Caco-2 (cell line): ENCODE measurements at regions of chr7 and their contacts with region 1.

Region 1: GRCh38 chr7:81956520-81956919 is 186.7 kb upstream of the HGF start:
- DNase-seq: peak; percentile 30 to 51
- H3K4me3 ChIP-seq: no peak overlapping the region
- H3K4me3 Mint-ChIP-seq: no peak overlapping the region
- H3K27ac Mint-ChIP-seq: no peak overlapping the region
- H3K4me1 ChIP-seq: no peaks in the 10 kb centered on the region
- H3K4me1 Mint-ChIP-seq: no peaks in the 10 kb centered on the region
- H3K27me3 ChIP-seq: no peaks in the 10 kb centered on the region
- H3K27me3 Mint-ChIP-seq: peaks cover 3% of the 10 kb centered on the region
- CTCF ChIP-seq: peak; percentile 53 to 71

Region 2: GRCh38 chr7:81482600-81483186 is 473.8 kb before region 1 on chr7:
- CTCF ChIA-PET with region 1: no interaction called
- POLR2A ChIA-PET with region 1: no interaction called
- intact Hi-C with region 1: loop called (anchors 1 kb)
- DNase-seq: no peak
- H3K4me3 ChIP-seq: no peak overlapping the region
- H3K4me3 Mint-ChIP-seq: no peak overlapping the region
- H3K27ac Mint-ChIP-seq: no peak overlapping the region
- H3K4me1 ChIP-seq: peaks cover 8% of the 10 kb centered on the region
- H3K4me1 Mint-ChIP-seq: no peaks in the 10 kb centered on the region
- H3K27me3 ChIP-seq: no peaks in the 10 kb centered on the region
- H3K27me3 Mint-ChIP-seq: peaks cover 4% of the 10 kb centered on the region
- CTCF ChIP-seq: peak; percentile 40 to 43

Region 3: DNA sequence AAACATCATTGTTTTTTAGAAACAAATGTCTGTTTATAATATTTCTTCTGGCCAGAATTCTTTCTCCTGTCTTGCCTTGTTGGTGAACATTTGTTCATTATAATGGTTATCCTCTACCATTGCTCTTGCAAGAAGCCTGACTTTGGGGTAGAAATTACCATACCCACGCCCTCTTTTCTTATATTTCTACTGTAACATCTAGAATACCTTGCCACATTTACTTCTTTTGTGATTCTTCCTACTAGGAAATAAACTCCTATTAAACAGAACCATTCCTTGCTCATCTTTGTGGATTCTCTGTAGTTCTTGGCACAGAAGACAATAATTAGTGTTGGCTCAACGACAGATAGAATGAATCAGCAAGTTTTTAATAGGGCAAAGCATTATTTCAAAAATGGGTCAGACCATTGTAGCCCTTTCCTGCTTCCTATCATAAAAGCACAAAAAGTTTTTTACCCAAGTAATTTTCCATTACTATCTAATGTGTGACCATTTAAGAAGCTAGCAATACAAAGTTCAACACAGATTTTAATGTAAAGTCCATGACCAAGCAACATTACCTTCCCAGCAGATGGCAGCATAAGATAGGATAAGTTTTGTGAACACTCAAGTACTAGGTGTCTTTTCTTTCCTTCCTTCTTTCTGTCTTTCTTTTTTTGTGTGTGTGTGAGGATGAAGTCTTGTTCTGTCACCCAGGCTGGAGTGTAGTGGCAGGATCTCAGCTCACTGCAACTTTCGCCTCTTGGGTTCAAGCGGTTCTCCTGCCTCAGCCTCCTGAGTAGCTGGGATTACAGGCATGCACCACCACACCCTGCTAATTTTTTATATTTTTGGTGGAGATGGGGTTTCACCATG is 457.0 kb before region 1 on chr7:
- CTCF ChIA-PET with region 1: no interaction called
- POLR2A ChIA-PET with region 1: no interaction called
- intact Hi-C with region 1: loop called (anchors 1 kb)
- DNase-seq: peak in 1 of 2 experiments; percentile 61
- H3K4me3 ChIP-seq: no peak overlapping the region
- H3K4me3 Mint-ChIP-seq: no peak overlapping the region
- H3K27ac Mint-ChIP-seq: no peak overlapping the region
- H3K4me1 ChIP-seq: no peaks in the 10 kb centered on the region
- H3K4me1 Mint-ChIP-seq: peaks cover 9% of the 10 kb centered on the region
- H3K27me3 ChIP-seq: no peaks in the 10 kb centered on the region
- H3K27me3 Mint-ChIP-seq: peaks cover 11% of the 10 kb centered on the region
- CTCF ChIP-seq: peak; percentile 43 to 44

Region 4: GRCh38 chr7:81527649-81528048 is 428.9 kb before region 1 on chr7:
- CTCF ChIA-PET with region 1: no interaction called
- POLR2A ChIA-PET with region 1: no interaction called
- intact Hi-C with region 1: loop called (anchors 1 kb)
- DNase-seq: peak in 1 of 2 experiments; percentile 41
- H3K4me3 ChIP-seq: no peak overlapping the region
- H3K4me3 Mint-ChIP-seq: no peak overlapping the region
- H3K27ac Mint-ChIP-seq: no peak overlapping the region
- H3K4me1 ChIP-seq: no peaks in the 10 kb centered on the region
- H3K4me1 Mint-ChIP-seq: no peaks in the 10 kb centered on the region
- H3K27me3 ChIP-seq: no peaks in the 10 kb centered on the region
- H3K27me3 Mint-ChIP-seq: peaks cover 3% of the 10 kb centered on the region
- CTCF ChIP-seq: peak in 1 of 2 experiments; percentile 30

Region 5: DNA sequence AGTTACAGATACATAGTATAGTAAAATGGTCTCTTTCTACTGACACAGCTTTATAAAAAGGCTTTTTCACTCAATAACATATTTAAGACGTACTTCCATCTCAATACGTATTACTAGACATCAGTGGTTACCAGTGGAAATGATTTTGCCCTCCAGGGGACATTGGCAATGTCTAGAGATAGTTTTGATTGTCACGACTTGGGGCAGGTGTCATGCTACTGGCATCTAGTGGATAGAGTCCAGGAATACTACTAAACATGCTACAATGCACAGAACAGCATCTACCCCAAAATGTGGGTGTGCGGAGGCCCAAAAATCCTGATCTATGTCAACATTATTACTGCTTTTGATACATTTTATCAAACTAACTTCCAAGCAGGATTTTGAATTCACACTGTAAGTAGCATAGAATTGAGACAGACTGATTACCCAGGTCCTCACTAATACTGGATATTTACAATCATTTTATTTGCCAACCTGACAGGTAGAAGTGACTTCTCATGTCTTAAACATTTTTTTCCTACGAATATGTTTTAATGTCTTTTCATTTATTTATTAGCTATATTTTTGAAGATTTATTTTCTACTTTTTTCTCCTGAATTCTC is 240.4 kb before region 1 on chr7:
- CTCF ChIA-PET with region 1: no interaction called
- POLR2A ChIA-PET with region 1: no interaction called
- intact Hi-C with region 1: loop called (anchors 1 kb)
- DNase-seq: peak; percentile 27 to 28
- H3K4me3 ChIP-seq: no peak overlapping the region
- H3K4me3 Mint-ChIP-seq: no peak overlapping the region
- H3K27ac Mint-ChIP-seq: no peak overlapping the region
- H3K4me1 ChIP-seq: no peaks in the 10 kb centered on the region
- H3K4me1 Mint-ChIP-seq: no peaks in the 10 kb centered on the region
- H3K27me3 ChIP-seq: no peaks in the 10 kb centered on the region
- H3K27me3 Mint-ChIP-seq: no peaks in the 10 kb centered on the region
- CTCF ChIP-seq: peak; percentile 38 to 40

Region 6: GRCh38 chr7:81776948-81777630 is 179.4 kb before region 1 on chr7:
- CTCF ChIA-PET with region 1: no interaction called
- POLR2A ChIA-PET with region 1: no interaction called
- intact Hi-C with region 1: loop called (anchors 1 kb)
- DNase-seq: peak in 1 of 2 experiments; percentile 7
- H3K4me3 ChIP-seq: no peak overlapping the region
- H3K4me3 Mint-ChIP-seq: no peak overlapping the region
- H3K27ac Mint-ChIP-seq: no peak overlapping the region
- H3K4me1 ChIP-seq: no peaks in the 10 kb centered on the region
- H3K4me1 Mint-ChIP-seq: no peaks in the 10 kb centered on the region
- H3K27me3 ChIP-seq: no peaks in the 10 kb centered on the region
- H3K27me3 Mint-ChIP-seq: peaks cover 6% of the 10 kb centered on the region
- CTCF ChIP-seq: peak; percentile 28 to 38